ENCODE measurements at regions of chr1 and their contacts with region 1.

Region 1: GRCh38 chr1:244901400-244902015 is 37.2 kb upstream of the HNRNPU start:
- DNase-seq: no peak
- H3K4me3 ChIP-seq: no peak overlapping the region
- H3K27ac ChIP-seq: no peak overlapping the region
- H3K4me1 ChIP-seq: no peaks in the 10 kb centered on the region
- H3K27me3 ChIP-seq: no peaks in the 10 kb centered on the region
- CTCF ChIP-seq: no peak
- EP300 ChIP-seq: no peak
- POLR2A ChIP-seq: no peak

Region 2: DNA sequence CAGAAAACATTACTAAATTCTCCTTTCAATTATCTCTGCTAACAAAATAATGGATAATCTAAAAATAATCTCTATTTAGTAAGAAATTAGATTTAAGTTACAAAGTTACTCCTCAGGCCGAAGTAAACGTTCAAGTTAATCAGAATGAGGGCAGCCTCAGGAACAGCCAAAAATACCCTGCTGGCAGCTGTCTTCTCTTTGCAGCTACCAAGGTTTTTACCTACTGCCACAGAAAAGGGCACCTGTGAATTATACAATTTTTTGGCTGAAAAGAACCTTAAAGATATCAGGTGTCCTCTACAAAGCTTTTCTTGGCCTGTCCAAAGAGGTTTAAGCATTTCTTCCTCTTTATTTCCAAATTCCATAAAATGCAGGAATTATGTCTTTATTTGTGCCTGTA is 1135.8 kb before region 1 on chr1:
- in situ Hi-C with region 1: no loop called
- intact Hi-C with region 1: loop called (anchors 5 kb)
- DNase-seq: no peak
- H3K4me3 ChIP-seq: no peak overlapping the region
- H3K27ac ChIP-seq: no peak overlapping the region
- H3K4me1 ChIP-seq: no peaks in the 10 kb centered on the region
- H3K27me3 ChIP-seq: no peaks in the 10 kb centered on the region
- CTCF ChIP-seq: no peak
- EP300 ChIP-seq: no peak
- POLR2A ChIP-seq: no peak

Region 3: GRCh38 chr1:244864253-244865027 is 37.1 kb before region 1 on chr1 and contains the start of gene HNRNPU:
- in situ Hi-C with region 1: no loop called
- intact Hi-C with region 1: no loop called
- DNase-seq: peak; percentile 98
- H3K4me3 ChIP-seq: peak within 1 kb of the TSS; percentile 93 to 100 (median 98)
- H3K27ac ChIP-seq: peak within 1 kb of the TSS; percentile 100
- H3K4me1 ChIP-seq: peaks cover 18 to 40% (median 28%) of the 10 kb centered on the region in 4 donors
- H3K27me3 ChIP-seq: no peaks in the 10 kb centered on the region
- CTCF ChIP-seq: peak; percentile 38 to 83 (median 41)
- EP300 ChIP-seq: peak; percentile 46
- POLR2A ChIP-seq: peak; percentile 99
- total RNA-seq, gene HNRNPU: 223 to 364 (median 237) TPM